ENCODE measurements at regions of chr22 and their contacts with region 1.

Region 1: GRCh38 chr22:30289134-30289979 is at the start of gene CASTOR1:
- DNase-seq: peak; percentile 82 to 89 (median 83)
- H3K4me3 ChIP-seq: peak within 1 kb of the TSS; percentile 47 to 66
- H3K4me3 Mint-ChIP-seq: peak within 1 kb of the TSS; percentile 88 to 94 (median 92)
- H3K27ac ChIP-seq: peak within 1 kb of the TSS; percentile 68
- H3K27ac Mint-ChIP-seq: peak within 1 kb of the TSS; percentile 91 to 96 (median 94)
- H3K4me1 ChIP-seq: peaks cover 41% of the 10 kb centered on the region
- H3K4me1 Mint-ChIP-seq: peaks cover 22 to 52% (median 30%) of the 10 kb centered on the region in 4 donors
- H3K27me3 ChIP-seq: no peaks in the 10 kb centered on the region
- H3K27me3 Mint-ChIP-seq: no peaks in the 10 kb centered on the region
- total RNA-seq, gene CASTOR1: 13.7 to 14.9 TPM

Region 2: DNA sequence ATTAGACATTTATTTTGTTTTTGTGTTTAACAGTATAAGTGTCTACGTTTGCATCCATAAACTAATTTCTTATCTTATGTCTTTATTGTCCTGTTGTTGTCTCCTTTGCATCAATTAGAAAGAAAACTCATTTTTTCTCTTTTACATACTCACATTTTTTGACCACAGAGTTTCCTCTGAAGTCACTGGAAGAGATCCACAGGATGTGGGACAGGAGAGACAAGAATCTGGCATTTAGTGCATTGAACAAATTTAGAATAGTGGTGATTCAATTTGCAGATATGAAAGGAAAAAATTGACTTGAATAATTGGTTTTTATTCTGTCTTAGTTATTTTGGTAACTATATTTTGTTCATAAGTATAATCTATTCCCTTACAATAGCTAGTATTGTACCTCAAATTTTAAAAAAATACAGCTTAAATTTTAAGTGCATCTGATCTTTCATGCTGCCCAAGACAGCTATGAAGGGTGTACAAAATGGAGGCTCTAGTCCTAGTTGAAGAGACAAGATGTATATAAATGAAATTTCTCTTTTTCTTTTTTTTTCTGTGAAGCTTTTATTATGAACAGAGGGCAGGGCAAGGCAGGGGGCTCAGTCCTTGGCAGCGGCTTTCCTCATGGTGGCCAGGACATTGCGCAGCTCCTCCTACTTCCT is 184.7 kb before region 1 on chr22:
- CTCF ChIA-PET with region 1: interaction called, 254 read pairs
- POLR2A ChIA-PET with region 1: interaction called, 28 read pairs
- intact Hi-C with region 1: loop called (anchors 1 kb)
- DNase-seq: peak in 4 of 5 donors; percentile 43 to 64 (median 48)
- H3K4me3 ChIP-seq: no peak overlapping the region
- H3K4me3 Mint-ChIP-seq: peak overlapping the region in 3 of 8 donors; percentile 45 to 78 (median 61)
- H3K27ac ChIP-seq: no peak overlapping the region
- H3K27ac Mint-ChIP-seq: peak overlapping the region in 6 of 7 donors; percentile 6 to 83 (median 50)
- H3K4me1 ChIP-seq: peaks cover 33% of the 10 kb centered on the region
- H3K4me1 Mint-ChIP-seq: peaks cover 21 to 50% (median 34%) of the 10 kb centered on the region in 4 donors
- H3K27me3 ChIP-seq: no peaks in the 10 kb centered on the region
- H3K27me3 Mint-ChIP-seq: no peaks in the 10 kb centered on the region

Region 3: GRCh38 chr22:30262917-30263741 is 26.2 kb before region 1 on chr22:
- CTCF ChIA-PET with region 1: no interaction called
- POLR2A ChIA-PET with region 1: interaction called, 106 read pairs
- intact Hi-C with region 1: loop called (anchors 1 kb)
- DNase-seq: peak; percentile 64 to 76 (median 68)
- H3K4me3 ChIP-seq: peak overlapping the region in 1 of 2 donors; percentile 24
- H3K4me3 Mint-ChIP-seq: peak overlapping the region; percentile 70 to 83 (median 74)
- H3K27ac ChIP-seq: peak overlapping the region; percentile 36
- H3K27ac Mint-ChIP-seq: peak overlapping the region; percentile 61 to 90 (median 86)
- H3K4me1 ChIP-seq: peaks cover 48% of the 10 kb centered on the region
- H3K4me1 Mint-ChIP-seq: peaks cover 24 to 56% (median 42%) of the 10 kb centered on the region in 4 donors
- H3K27me3 ChIP-seq: no peaks in the 10 kb centered on the region
- H3K27me3 Mint-ChIP-seq: no peaks in the 10 kb centered on the region

Region 4: DNA sequence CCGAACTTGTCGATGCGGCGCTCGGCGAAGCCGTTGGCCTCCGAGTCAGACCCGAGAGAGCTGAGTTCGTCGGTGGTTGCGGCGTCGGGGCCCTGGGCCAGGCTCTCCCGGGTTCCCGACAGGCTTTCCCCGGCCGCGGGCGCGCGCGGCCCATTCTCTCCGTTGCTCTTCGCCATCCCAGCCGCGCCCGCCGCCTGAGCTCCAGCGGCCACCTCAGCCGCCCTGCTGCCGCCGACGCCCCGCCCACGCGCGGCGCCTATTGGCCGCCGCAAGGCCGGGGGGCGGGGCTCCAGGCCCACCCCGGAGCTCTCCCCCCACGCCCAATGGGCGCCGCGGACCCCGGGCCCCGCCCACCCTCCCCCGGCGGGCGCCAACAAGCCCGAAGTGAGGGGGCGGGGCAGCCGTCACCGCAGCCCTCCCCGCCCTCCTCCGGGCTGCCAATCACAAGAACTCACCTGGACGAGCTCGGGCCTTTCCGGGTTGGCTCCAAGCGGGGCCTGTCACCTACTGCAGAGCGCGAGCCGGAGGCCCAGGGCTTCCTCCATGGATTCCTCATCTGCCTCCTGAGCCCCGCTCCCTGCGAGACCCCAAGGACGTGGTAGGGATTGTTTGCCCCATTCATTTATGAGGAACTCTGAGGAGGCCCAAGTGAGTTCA is 37.5 kb after region 1 on chr22 and contains the start of gene TBC1D10A:
- CTCF ChIA-PET with region 1: interaction called, 115 read pairs
- POLR2A ChIA-PET with region 1: interaction called, 244 read pairs
- intact Hi-C with region 1: loop called (anchors 1 kb)
- DNase-seq: peak; percentile 92 to 94 (median 93)
- H3K4me3 ChIP-seq: peak within 1 kb of the TSS; percentile 76 to 78
- H3K4me3 Mint-ChIP-seq: peak within 1 kb of the TSS; percentile 90 to 95 (median 93)
- H3K27ac ChIP-seq: peak within 1 kb of the TSS; percentile 83
- H3K27ac Mint-ChIP-seq: peak within 1 kb of the TSS; percentile 90 to 97 (median 93)
- H3K4me1 ChIP-seq: peaks cover 50% of the 10 kb centered on the region
- H3K4me1 Mint-ChIP-seq: peaks cover 37 to 54% (median 45%) of the 10 kb centered on the region in 4 donors
- H3K27me3 ChIP-seq: no peaks in the 10 kb centered on the region
- H3K27me3 Mint-ChIP-seq: no peaks in the 10 kb centered on the region
- total RNA-seq, gene TBC1D10A: 62.2 to 76.8 TPM

Region 5: DNA sequence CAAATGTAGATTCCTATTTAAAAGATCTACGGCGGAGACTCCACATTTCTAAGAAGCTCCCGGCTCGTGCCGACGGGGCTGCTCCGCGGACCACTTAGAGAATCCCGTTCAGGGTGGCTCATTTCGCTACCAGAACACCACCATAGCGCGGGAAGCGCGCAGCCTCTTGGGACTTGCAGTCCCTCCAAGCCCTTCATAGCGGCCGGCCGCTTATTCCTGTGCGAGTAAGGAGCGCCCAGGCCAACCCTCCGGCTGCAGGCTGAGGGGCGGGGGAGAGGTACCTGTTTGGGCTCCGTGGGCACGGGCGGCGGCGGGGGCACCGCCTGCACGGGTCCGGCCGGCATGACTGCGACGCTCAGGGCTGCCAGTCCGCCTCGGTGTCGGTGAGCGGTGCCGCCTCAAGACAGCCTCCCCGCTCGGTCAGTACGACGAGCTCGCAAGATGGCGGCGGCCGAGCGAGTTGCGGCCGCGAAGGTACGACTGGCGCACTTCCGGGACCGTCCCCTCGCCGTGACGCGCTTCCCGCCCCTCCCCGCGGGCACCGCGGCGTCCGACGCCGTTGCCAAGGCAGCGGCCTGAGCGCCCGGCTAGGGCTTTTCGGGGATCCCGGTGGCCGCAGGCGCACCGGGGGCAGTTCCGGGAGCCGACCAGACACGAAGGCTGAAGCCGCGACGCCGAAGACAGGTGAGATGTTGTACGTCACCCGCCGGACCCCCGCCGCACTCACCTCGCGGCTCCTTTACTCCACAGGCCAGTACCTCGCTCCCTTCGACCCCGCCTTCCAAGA is 67.3 kb after region 1 on chr22 and contains the starts of genes CCDC157 and SF3A1:
- CTCF ChIA-PET with region 1: interaction called, 42 read pairs
- POLR2A ChIA-PET with region 1: interaction called, 118 read pairs
- intact Hi-C with region 1: loop called (anchors 1 kb)
- DNase-seq: peak; percentile 86 to 90 (median 89)
- H3K4me3 ChIP-seq: peak within 1 kb of the TSS; percentile 82 to 94
- H3K4me3 Mint-ChIP-seq: peak within 1 kb of the TSS; percentile 93 to 98 (median 97)
- H3K27ac ChIP-seq: peak within 1 kb of the TSS; percentile 96
- H3K27ac Mint-ChIP-seq: peak within 1 kb of the TSS; percentile 94 to 99 (median 98)
- H3K4me1 ChIP-seq: peaks cover 47% of the 10 kb centered on the region
- H3K4me1 Mint-ChIP-seq: peaks cover 25 to 60% (median 46%) of the 10 kb centered on the region in 4 donors
- H3K27me3 ChIP-seq: no peaks in the 10 kb centered on the region
- H3K27me3 Mint-ChIP-seq: no peaks in the 10 kb centered on the region
- total RNA-seq, gene CCDC157: 2.1 to 3.0 TPM
- total RNA-seq, gene SF3A1: 279 to 301 TPM

Region 6: GRCh38 chr22:30423982-30424963 is 134.9 kb after region 1 on chr22:
- CTCF ChIA-PET with region 1: interaction called, 32 read pairs
- POLR2A ChIA-PET with region 1: interaction called, 38 read pairs
- intact Hi-C with region 1: loop called (anchors 1 kb)
- DNase-seq: peak; percentile 97 to 99 (median 99)
- H3K4me3 ChIP-seq: peak overlapping the region; percentile 71 to 79
- H3K4me3 Mint-ChIP-seq: peak overlapping the region; percentile 96 to 99 (median 98)
- H3K27ac ChIP-seq: peak overlapping the region; percentile 89
- H3K27ac Mint-ChIP-seq: peak overlapping the region; percentile 88 to 99 (median 99)
- H3K4me1 ChIP-seq: peaks cover 47% of the 10 kb centered on the region
- H3K4me1 Mint-ChIP-seq: peaks cover 35 to 72% (median 49%) of the 10 kb centered on the region in 4 donors
- H3K27me3 ChIP-seq: no peaks in the 10 kb centered on the region
- H3K27me3 Mint-ChIP-seq: no peaks in the 10 kb centered on the region

Measured in CD4-positive, alpha-beta memory T cell (primary cell).